Posterior vena cava (tissue), 2 donors: ENCODE measurements at regions of chr4 and their contacts with region 1.

Region 1: DNA sequence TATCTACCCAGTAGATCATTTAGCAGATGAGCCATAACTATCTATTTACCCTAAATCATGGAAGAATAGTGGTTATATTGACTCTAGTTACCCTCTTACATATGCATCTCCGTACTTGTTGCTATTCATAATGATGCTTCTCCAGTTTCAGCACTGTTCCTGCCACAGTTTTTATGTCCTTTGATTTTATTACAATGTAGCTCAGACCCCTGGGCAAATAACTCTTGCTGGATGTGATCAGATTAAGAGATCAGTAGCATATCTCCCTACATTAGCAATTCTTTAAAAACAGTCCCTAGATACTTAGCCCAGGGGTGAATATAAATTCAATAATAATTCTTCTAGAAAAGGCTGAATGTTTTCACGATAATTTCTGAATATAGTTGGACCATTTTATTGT is 696.5 kb downstream of the ADGRL3 start:
- DNase-seq: no peak

Region 2: DNA sequence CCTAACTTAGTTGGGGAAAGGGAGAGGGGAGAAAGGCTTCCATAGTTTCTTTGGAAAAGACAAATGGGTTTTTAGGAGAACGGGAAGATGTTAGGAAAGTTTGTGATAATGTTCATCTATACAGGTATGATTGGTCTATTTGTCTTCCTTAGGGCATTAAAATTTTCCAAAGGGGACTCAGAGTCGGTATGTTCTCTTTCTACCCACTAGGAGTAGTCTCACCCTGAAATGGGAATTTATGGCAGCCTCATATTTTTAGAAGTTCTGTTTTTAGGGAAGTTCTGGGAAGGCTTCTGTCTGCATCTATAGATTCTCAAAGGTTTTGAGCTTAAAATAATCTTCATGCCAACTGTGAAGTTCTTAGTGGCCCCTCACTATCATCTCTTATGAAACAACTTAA is 59.2 kb before region 1 on chr4:
- intact Hi-C with region 1: loop called in 1 of 2 experiments (anchors 2 kb)
- DNase-seq: no peak

Region 3: DNA sequence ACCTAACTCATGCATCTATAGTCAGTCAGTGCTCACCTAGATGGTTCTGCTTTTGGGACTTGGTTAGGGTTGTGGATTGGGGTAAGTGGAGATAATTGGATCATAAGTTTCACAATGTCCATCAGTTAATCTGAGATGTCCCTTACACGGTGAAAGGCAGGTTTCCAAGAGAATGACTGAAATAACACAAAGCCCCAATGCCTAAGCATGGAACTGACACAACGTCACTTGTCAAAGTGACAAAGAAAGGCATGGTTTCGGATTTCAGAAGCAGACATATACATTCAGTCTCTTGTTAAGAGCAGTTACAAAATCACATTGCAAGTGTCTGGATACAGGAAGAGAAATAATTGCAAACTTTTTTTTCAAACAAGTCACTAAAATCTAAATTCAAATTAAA is 1055.7 kb after region 1 on chr4:
- intact Hi-C with region 1: no loop called
- DNase-seq: no peak